A549 (cell line): ENCODE measurements at regions of chr9 and their contacts with region 1.

Region 1: GRCh38 chr9:114662081-114662989 is 4.7 kb upstream of the TEX53 start:
- DNase-seq: peak; percentile 33 to 92
- ATAC-seq: peak; percentile 86 to 97
- H3K4me3 ChIP-seq: no peak overlapping the region
- H3K27ac ChIP-seq: peak overlapping the region; percentile 10 to 40; a peak in 4 of 6 replicates
- H3K4me1 ChIP-seq: no peaks in the 10 kb centered on the region
- CTCF ChIP-seq: peak; percentile 88
- EP300 ChIP-seq: no peak
- POLR2A ChIP-seq: no peak
- RAD21 ChIP-seq: peak; percentile 94

Region 2: DNA sequence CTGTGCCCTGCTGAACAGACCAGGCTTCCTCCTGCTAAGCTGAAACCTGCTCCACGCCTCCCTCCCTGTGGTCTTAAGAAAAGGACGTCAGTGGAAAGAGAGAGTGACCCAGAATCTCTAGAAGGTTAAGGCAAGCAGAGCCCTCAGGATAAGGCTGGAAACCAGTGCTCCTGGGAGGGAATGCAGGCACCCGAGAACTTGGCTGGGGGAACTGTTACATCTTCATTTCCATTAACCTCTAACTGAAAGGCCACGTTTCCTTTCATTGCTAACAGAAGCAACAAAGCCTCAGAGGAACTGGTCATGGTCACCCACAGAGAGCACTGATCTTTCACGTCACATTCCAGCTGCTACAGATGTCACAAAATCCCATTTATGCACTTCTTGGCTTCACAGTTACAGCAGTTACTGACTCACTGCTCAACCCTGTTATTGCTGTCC is 248.5 kb before region 1 on chr9:
- CTCF ChIA-PET with region 1: interaction called, 11 read pairs
- POLR2A ChIA-PET with region 1: no interaction called
- DNase-seq: no peak
- ATAC-seq: no peak
- H3K4me3 ChIP-seq: no peak overlapping the region
- H3K27ac ChIP-seq: no peak overlapping the region
- H3K4me1 ChIP-seq: no peaks in the 10 kb centered on the region
- CTCF ChIP-seq: no peak
- EP300 ChIP-seq: no peak
- POLR2A ChIP-seq: no peak
- RAD21 ChIP-seq: no peak

Region 3: GRCh38 chr9:114574438-114574837 is 87.9 kb before region 1 on chr9:
- CTCF ChIA-PET with region 1: no interaction called
- POLR2A ChIA-PET with region 1: no interaction called
- DNase-seq: no peak
- ATAC-seq: no peak
- H3K4me3 ChIP-seq: no peak overlapping the region
- H3K27ac ChIP-seq: no peak overlapping the region
- H3K4me1 ChIP-seq: no peaks in the 10 kb centered on the region
- CTCF ChIP-seq: no peak
- EP300 ChIP-seq: no peak
- POLR2A ChIP-seq: no peak
- RAD21 ChIP-seq: no peak

Region 4: DNA sequence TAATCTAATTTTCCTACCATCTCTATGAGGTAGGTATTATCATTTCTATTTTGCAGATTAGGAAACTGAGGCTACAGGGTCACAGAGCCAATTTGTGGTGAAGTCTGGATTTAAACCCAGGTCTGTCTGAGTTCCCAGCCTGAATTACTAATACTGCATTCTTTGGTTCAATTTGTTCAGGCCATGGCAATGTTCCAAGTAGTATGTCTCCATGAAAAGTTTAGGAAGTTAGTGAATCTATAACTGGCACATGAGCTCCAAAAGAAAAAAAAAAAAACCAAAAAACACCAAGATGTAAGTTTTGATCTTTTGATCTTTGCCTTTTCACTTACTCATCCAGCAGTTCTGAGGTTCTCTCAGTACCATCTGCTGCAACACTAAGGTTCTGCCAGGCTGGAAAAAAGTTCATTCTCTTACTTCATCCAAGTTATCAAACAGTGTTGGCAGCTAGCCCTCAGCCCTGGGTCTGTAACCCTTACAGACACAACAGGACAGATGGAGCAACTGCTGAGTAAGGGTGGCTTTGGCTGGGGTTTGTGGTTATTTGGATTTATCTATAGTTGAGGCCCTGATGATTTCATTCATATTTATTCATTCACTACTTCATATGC is 55.6 kb before region 1 on chr9:
- CTCF ChIA-PET with region 1: no interaction called
- POLR2A ChIA-PET with region 1: no interaction called
- DNase-seq: no peak
- ATAC-seq: no peak
- H3K4me3 ChIP-seq: no peak overlapping the region
- H3K27ac ChIP-seq: peak overlapping the region; percentile 3 to 38; a peak in 2 of 6 replicates
- H3K4me1 ChIP-seq: peaks cover 17% of the 10 kb centered on the region; the same call in 1 of the 3 replicates
- CTCF ChIP-seq: no peak
- EP300 ChIP-seq: no peak
- POLR2A ChIP-seq: no peak
- RAD21 ChIP-seq: no peak

Region 5: DNA sequence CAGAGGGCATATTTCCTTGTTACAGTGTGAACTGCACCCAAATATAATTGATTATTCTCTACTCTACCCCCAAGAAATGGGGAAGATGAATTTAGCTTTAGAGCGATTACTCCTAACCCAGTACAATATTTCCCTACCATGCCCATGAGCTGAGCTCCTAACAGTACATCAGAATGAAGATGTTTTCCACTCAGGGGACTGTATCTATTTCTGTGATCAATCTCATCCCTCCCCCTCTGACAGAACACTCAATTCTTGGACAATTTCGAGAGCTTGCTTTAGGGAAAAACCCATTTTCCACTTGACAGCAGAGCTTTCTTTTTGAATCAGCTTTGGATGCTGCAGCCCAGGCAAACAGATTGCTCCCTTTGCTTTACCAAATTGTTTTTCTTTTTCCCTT is 44.4 kb after region 1 on chr9:
- CTCF ChIA-PET with region 1: interaction called, 11 read pairs
- POLR2A ChIA-PET with region 1: no interaction called
- DNase-seq: no peak
- ATAC-seq: no peak
- H3K4me3 ChIP-seq: no peak overlapping the region
- H3K27ac ChIP-seq: no peak overlapping the region
- H3K4me1 ChIP-seq: no peaks in the 10 kb centered on the region
- CTCF ChIP-seq: no peak
- EP300 ChIP-seq: no peak
- POLR2A ChIP-seq: no peak
- RAD21 ChIP-seq: no peak

Region 6: GRCh38 chr9:114914139-114914538 is 251.8 kb after region 1 on chr9:
- CTCF ChIA-PET with region 1: interaction called, 104 read pairs
- POLR2A ChIA-PET with region 1: no interaction called
- DNase-seq: no peak
- ATAC-seq: peak in 1 of 2 experiments; percentile 57; a peak in 2 of 6 replicates
- H3K4me3 ChIP-seq: no peak overlapping the region
- H3K27ac ChIP-seq: no peak overlapping the region
- H3K4me1 ChIP-seq: peaks cover 20% of the 10 kb centered on the region
- CTCF ChIP-seq: no peak
- EP300 ChIP-seq: no peak
- POLR2A ChIP-seq: no peak
- RAD21 ChIP-seq: no peak

Region 7: GRCh38 chr9:114919611-114920010 is 257.3 kb after region 1 on chr9:
- CTCF ChIA-PET with region 1: interaction called, 18 read pairs
- POLR2A ChIA-PET with region 1: no interaction called
- DNase-seq: no peak
- ATAC-seq: no peak
- H3K4me3 ChIP-seq: no peak overlapping the region
- H3K27ac ChIP-seq: no peak overlapping the region
- H3K4me1 ChIP-seq: no peaks in the 10 kb centered on the region
- CTCF ChIP-seq: no peak
- EP300 ChIP-seq: no peak
- POLR2A ChIP-seq: no peak
- RAD21 ChIP-seq: no peak